Transverse colon (tissue), 4 donors: ENCODE measurements at regions of chr1 and their contacts with region 1.

Region 1: GRCh38 chr1:8560611-8561544 is 243.0 kb downstream of the SLC45A1 start:
- DNase-seq: no peak
- H3K4me3 ChIP-seq: no peak overlapping the region
- H3K27ac ChIP-seq: no peak overlapping the region
- H3K4me1 ChIP-seq: peaks cover 0 to 15% (median 3%) of the 10 kb centered on the region in 4 donors
- H3K27me3 ChIP-seq: no peaks in the 10 kb centered on the region
- CTCF ChIP-seq: peak; percentile 89 to 95 (median 93)
- EP300 ChIP-seq: no peak
- POLR2A ChIP-seq: no peak

Region 2: GRCh38 chr1:6711174-6711573 is 1849.7 kb before region 1 on chr1:
- in situ Hi-C with region 1: no loop called
- intact Hi-C with region 1: no loop called
- DNase-seq: no peak
- H3K4me3 ChIP-seq: no peak overlapping the region
- H3K27ac ChIP-seq: no peak overlapping the region
- H3K4me1 ChIP-seq: peaks cover 0 to 10% (median 6%) of the 10 kb centered on the region in 4 donors
- H3K27me3 ChIP-seq: no peaks in the 10 kb centered on the region
- CTCF ChIP-seq: no peak
- EP300 ChIP-seq: no peak
- POLR2A ChIP-seq: no peak

Region 3: DNA sequence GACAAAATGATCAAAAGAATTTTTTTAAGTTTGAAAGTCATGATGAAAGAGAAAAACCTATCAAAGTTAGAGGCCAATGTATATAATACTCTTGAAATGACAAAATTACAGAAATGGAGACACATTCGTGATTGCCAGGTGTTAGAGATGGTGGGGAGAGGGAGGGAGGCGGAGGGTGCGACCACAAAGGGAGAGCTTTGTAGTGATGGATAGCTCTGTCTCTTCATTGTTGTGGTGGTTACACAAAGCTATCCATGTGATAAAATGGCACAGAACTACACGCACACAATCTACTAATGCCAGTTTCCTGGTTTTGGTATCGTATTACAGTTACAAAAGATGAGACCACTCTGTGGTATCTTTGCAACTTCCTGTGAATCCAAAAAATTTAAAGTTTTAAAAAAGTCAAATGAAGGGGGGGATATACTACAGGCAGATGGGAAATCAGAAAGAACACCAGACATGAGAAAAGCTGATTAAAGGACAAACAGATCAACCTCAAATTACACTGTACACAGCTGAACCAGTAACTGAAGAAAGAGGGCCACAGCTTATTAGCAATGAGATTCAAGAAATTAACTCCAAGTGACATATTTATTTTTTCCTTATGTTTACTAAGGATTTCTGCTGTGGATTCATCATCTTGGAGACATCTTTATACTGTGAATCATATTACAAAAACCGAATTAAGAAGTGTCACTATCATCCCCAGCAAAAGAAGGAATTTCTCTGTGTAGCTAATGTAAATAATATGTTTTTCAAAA is 43.9 kb before region 1 on chr1:
- in situ Hi-C with region 1: no loop called
- intact Hi-C with region 1: no loop called
- DNase-seq: no peak
- H3K4me3 ChIP-seq: no peak overlapping the region
- H3K27ac ChIP-seq: peak overlapping the region; percentile 32 to 71 (median 56)
- H3K4me1 ChIP-seq: peaks cover 0 to 27% (median 0%) of the 10 kb centered on the region in 4 donors
- H3K27me3 ChIP-seq: no peaks in the 10 kb centered on the region
- CTCF ChIP-seq: no peak
- EP300 ChIP-seq: no peak
- POLR2A ChIP-seq: no peak

Region 4: DNA sequence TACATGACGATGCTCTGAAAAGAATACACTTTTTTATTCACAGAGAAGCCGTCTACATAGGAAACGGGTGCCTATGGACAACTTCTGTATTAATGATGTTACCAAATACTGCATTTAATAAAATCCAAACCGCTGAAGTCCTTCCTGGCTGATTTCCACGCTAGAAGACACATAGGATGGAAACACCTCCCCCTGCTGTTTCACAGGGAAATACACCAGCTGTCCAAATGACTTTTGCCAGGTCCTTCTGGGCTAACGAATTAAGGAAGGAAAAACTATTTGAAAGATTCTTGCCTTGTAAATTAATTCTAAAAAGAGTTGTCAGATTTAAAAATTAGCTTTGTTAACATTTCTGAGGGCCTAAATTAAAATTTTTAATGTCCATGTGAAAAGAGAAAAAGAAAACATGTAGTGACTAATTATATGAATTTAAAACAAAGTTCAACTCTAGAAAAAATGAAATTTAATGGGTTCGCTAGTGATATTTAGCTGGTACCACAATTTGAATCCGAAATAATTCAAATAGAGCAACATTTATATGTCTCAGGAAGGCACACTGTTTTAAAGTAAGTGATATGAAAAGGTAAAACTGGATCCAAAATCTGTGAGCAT is 110.5 kb after region 1 on chr1:
- in situ Hi-C with region 1: loop called in 3 of 4 experiments (anchors 5 to 25 kb)
- intact Hi-C with region 1: loop called (anchors 10 kb)
- DNase-seq: no peak
- H3K4me3 ChIP-seq: no peak overlapping the region
- H3K27ac ChIP-seq: no peak overlapping the region
- H3K4me1 ChIP-seq: peaks cover 21 to 81% (median 41%) of the 10 kb centered on the region in 4 donors
- H3K27me3 ChIP-seq: no peaks in the 10 kb centered on the region
- CTCF ChIP-seq: peak; percentile 71 to 81 (median 75)
- EP300 ChIP-seq: no peak
- POLR2A ChIP-seq: no peak

Region 5: GRCh38 chr1:8848663-8849386 is 287.9 kb after region 1 on chr1:
- in situ Hi-C with region 1: loop called (anchors 10 to 25 kb)
- intact Hi-C with region 1: no loop called
- DNase-seq: peak; percentile 92
- H3K4me3 ChIP-seq: no peak overlapping the region
- H3K27ac ChIP-seq: peak overlapping the region; percentile 36 to 73 (median 65)
- H3K4me1 ChIP-seq: peaks cover 4 to 24% (median 15%) of the 10 kb centered on the region in 4 donors
- H3K27me3 ChIP-seq: no peaks in the 10 kb centered on the region
- CTCF ChIP-seq: peak; percentile 86 to 94 (median 93)
- EP300 ChIP-seq: no peak
- POLR2A ChIP-seq: no peak

Region 6: GRCh38 chr1:8858888-8859706 is 298.2 kb after region 1 on chr1:
- in situ Hi-C with region 1: loop called in 2 of 4 experiments (anchors 10 kb)
- intact Hi-C with region 1: loop called (anchors 5 kb)
- DNase-seq: no peak
- H3K4me3 ChIP-seq: no peak overlapping the region
- H3K27ac ChIP-seq: peak overlapping the region in 2 of 4 donors; percentile 17 to 42
- H3K4me1 ChIP-seq: peaks cover 0 to 20% (median 11%) of the 10 kb centered on the region in 4 donors
- H3K27me3 ChIP-seq: no peaks in the 10 kb centered on the region
- CTCF ChIP-seq: peak; percentile 53 to 63 (median 59)
- EP300 ChIP-seq: no peak
- POLR2A ChIP-seq: no peak